ENCODE measurements at regions of chr9 and their contacts with region 1.

Region 1: GRCh38 chr9:133184962-133185361 is 21.2 kb upstream of the GBGT1 start:
- DNase-seq: no peak
- H3K4me3 ChIP-seq: no peak overlapping the region
- H3K27ac ChIP-seq: no peak overlapping the region
- H3K4me1 ChIP-seq: peaks cover 0 to 20% (median 12%) of the 10 kb centered on the region in 6 donors
- H3K27me3 ChIP-seq: peaks cover 0 to 65% (median 3%) of the 10 kb centered on the region in 7 donors
- CTCF ChIP-seq: peak in 10 of 11 experiments; percentile 28 to 72 (median 59)
- POLR2A ChIP-seq: no peak

Region 2: GRCh38 chr9:133327834-133328484 is 143.0 kb after region 1 on chr9:
- intact Hi-C with region 1: loop called (anchors 5 kb)
- DNase-seq: peak; percentile 32
- H3K4me3 ChIP-seq: no peak overlapping the region
- H3K27ac ChIP-seq: no peak overlapping the region
- H3K4me1 ChIP-seq: peaks cover 0 to 11% (median 1%) of the 10 kb centered on the region in 6 donors
- H3K27me3 ChIP-seq: no peaks in the 10 kb centered on the region
- CTCF ChIP-seq: no peak
- POLR2A ChIP-seq: no peak

Region 3: GRCh38 chr9:133406480-133407307 is 221.7 kb after region 1 on chr9:
- intact Hi-C with region 1: loop called (anchors 10 kb)
- DNase-seq: peak; percentile 93
- H3K4me3 ChIP-seq: no peak overlapping the region
- H3K27ac ChIP-seq: peak overlapping the region in 1 of 8 donors; percentile 17
- H3K4me1 ChIP-seq: peaks cover 0 to 12% (median 2%) of the 10 kb centered on the region in 6 donors
- H3K27me3 ChIP-seq: no peaks in the 10 kb centered on the region
- CTCF ChIP-seq: peak; percentile 82 to 96 (median 92)
- POLR2A ChIP-seq: no peak

Region 4: DNA sequence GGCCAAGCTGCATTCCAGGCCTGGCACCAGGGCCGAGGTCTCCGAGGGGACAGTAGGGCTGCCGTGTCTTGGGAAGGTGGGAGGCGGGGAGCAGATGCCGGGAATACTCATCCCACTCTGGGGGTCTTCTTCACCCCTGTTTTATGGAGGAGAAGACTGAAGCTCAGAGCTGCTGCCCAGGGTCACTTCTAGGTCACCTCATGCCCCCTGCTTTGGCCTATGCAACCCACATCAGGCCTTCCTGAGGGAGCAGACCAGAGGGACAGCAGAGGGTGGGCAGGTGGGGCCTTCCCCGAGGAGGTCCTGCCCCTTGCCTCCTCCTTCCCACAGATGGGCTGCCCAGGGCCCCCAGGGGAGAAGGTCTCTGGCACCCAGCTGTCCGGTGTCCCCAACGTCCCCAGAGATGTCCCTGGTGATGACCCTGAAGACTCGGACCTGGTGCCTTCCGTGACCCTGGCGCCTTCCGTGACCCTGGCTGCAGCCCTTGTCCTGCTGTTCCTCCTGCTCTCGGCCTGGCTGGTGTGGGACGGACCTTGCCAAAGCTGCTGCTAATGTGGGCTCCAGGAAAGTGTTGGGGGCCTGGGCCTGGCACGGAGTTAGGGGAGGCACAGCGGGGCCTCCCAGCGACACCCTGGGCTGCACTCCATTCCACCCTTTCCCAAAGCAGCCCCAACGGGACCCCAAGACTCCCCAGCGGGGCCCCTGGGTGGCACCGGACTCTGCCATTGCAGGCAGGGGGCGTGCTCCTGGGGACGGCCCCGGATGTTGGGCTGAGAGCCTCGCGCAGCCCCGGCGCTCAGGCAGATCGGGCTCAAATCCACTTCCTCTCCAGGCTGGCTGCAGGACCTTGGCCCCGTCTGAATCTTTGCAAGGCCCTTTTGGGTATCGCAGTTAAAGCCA is 300.6 kb after region 1 on chr9:
- intact Hi-C with region 1: loop called (anchors 5 kb)
- DNase-seq: peak; percentile 80
- H3K4me3 ChIP-seq: peak overlapping the region in 2 of 8 donors; percentile 3 to 46
- H3K27ac ChIP-seq: no peak overlapping the region
- H3K4me1 ChIP-seq: peaks cover 4 to 24% (median 17%) of the 10 kb centered on the region in 6 donors
- H3K27me3 ChIP-seq: peaks cover 0 to 34% (median 0%) of the 10 kb centered on the region in 7 donors
- CTCF ChIP-seq: no peak
- POLR2A ChIP-seq: no peak

Measured in spleen (tissue), 13 donors.